ENCODE measurements at regions of chr19 and their contacts with region 1.

Region 1: GRCh38 chr19:53431399-53432087 is at the start of gene ZNF761:
- DNase-seq: peak; percentile 95 to 99 (median 97)
- H3K4me3 ChIP-seq: peak within 1 kb of the TSS; percentile 77 to 80
- H3K4me3 Mint-ChIP-seq: peak within 1 kb of the TSS; percentile 97 to 100 (median 98)
- H3K27ac ChIP-seq: peak within 1 kb of the TSS; percentile 68
- H3K27ac Mint-ChIP-seq: peak within 1 kb of the TSS; percentile 92 to 99 (median 97)
- H3K4me1 ChIP-seq: peaks cover 15% of the 10 kb centered on the region
- H3K4me1 Mint-ChIP-seq: peaks cover 17 to 45% (median 30%) of the 10 kb centered on the region in 4 donors
- H3K27me3 ChIP-seq: no peaks in the 10 kb centered on the region
- H3K27me3 Mint-ChIP-seq: no peaks in the 10 kb centered on the region
- total RNA-seq, gene ZNF761: 18.3 to 20.2 TPM

Region 2: GRCh38 chr19:53365134-53365898 is 66.2 kb before region 1 on chr19 and contains the start of gene ZNF525:
- CTCF ChIA-PET with region 1: no interaction called
- POLR2A ChIA-PET with region 1: no interaction called
- intact Hi-C with region 1: loop called (anchors 2 kb)
- DNase-seq: peak; percentile 93 to 97 (median 96)
- H3K4me3 ChIP-seq: peak within 1 kb of the TSS; percentile 57 to 87
- H3K4me3 Mint-ChIP-seq: peak within 1 kb of the TSS; percentile 95 to 99 (median 96)
- H3K27ac ChIP-seq: peak within 1 kb of the TSS; percentile 70
- H3K27ac Mint-ChIP-seq: peak within 1 kb of the TSS; percentile 90 to 98 (median 97)
- H3K4me1 ChIP-seq: peaks cover 6% of the 10 kb centered on the region
- H3K4me1 Mint-ChIP-seq: peaks cover 15 to 38% (median 21%) of the 10 kb centered on the region in 4 donors
- H3K27me3 ChIP-seq: no peaks in the 10 kb centered on the region
- H3K27me3 Mint-ChIP-seq: no peaks in the 10 kb centered on the region
- total RNA-seq, gene ZNF525: 36.5 to 36.6 TPM

Region 3: DNA sequence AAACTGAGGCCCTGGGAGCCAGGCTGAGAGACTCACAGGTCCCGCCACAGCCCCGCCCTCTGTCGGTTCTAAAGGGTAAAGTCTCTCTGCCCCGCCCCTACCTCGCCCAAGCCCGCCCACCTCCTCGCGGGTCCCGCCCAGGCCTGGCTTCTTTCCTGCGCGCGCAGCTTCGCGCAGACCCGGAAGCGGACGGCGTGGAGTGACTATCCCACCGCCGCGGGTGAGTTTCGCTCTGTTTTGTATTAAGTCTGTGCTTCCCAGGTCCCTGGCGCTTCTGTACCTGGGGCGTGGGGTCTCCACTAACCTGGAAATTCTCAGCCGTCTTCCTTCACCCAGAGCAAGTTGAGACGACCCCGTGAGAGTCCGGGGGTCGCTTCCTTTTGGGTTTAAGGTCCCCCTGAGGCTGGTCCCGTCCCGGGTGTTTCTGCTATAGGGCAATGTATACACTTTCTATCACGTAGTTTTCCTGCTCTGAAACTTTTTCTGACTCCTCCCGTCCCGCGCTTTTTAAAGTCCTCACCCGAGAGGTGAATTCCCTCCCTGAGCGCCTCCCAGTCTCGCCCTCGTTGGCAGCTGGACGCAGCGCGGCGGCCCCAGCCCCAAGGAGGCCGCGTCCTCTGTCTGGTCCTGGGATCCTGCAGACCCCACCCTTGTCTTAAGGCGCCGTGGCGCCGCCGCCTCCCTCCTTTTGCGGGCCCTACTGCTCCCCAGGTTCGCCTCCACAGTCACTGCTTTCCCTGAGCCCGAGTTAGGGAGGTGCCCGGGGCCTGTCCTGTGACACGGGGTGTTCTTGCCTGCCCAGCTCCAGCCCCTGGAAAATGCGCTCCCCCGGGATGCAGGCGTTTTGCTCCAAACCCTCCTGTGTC is 36.3 kb before region 1 on chr19 and contains the start of gene ZNF765:
- CTCF ChIA-PET with region 1: no interaction called
- POLR2A ChIA-PET with region 1: no interaction called
- intact Hi-C with region 1: loop called (anchors 1 kb)
- DNase-seq: peak; percentile 93 to 98 (median 95)
- H3K4me3 ChIP-seq: peak within 1 kb of the TSS; percentile 69 to 70
- H3K4me3 Mint-ChIP-seq: peak within 1 kb of the TSS; percentile 92 to 99 (median 98)
- H3K27ac ChIP-seq: peak within 1 kb of the TSS; percentile 75
- H3K27ac Mint-ChIP-seq: peak within 1 kb of the TSS; percentile 91 to 98 (median 96)
- H3K4me1 ChIP-seq: peaks cover 20% of the 10 kb centered on the region
- H3K4me1 Mint-ChIP-seq: peaks cover 18 to 41% (median 29%) of the 10 kb centered on the region in 4 donors
- H3K27me3 ChIP-seq: no peaks in the 10 kb centered on the region
- H3K27me3 Mint-ChIP-seq: no peaks in the 10 kb centered on the region
- total RNA-seq, gene ZNF765: 20.9 to 21.6 TPM

Region 4: GRCh38 chr19:53467485-53468262 is 36.1 kb after region 1 on chr19 and contains the start of gene ZNF813:
- CTCF ChIA-PET with region 1: no interaction called
- POLR2A ChIA-PET with region 1: no interaction called
- intact Hi-C with region 1: loop called (anchors 1 kb)
- DNase-seq: peak; percentile 88 to 96 (median 91)
- H3K4me3 ChIP-seq: peak within 1 kb of the TSS; percentile 57 to 62
- H3K4me3 Mint-ChIP-seq: peak within 1 kb of the TSS; percentile 89 to 96 (median 93)
- H3K27ac ChIP-seq: peak within 1 kb of the TSS; percentile 51
- H3K27ac Mint-ChIP-seq: peak within 1 kb of the TSS; percentile 83 to 94 (median 91)
- H3K4me1 ChIP-seq: peaks cover 13% of the 10 kb centered on the region
- H3K4me1 Mint-ChIP-seq: peaks cover 14 to 45% (median 25%) of the 10 kb centered on the region in 4 donors
- H3K27me3 ChIP-seq: no peaks in the 10 kb centered on the region
- H3K27me3 Mint-ChIP-seq: peaks cover 8 to 9% of the 10 kb centered on the region in 2 donors
- total RNA-seq, gene ZNF813: 9.4 to 10.1 TPM

Region 5: DNA sequence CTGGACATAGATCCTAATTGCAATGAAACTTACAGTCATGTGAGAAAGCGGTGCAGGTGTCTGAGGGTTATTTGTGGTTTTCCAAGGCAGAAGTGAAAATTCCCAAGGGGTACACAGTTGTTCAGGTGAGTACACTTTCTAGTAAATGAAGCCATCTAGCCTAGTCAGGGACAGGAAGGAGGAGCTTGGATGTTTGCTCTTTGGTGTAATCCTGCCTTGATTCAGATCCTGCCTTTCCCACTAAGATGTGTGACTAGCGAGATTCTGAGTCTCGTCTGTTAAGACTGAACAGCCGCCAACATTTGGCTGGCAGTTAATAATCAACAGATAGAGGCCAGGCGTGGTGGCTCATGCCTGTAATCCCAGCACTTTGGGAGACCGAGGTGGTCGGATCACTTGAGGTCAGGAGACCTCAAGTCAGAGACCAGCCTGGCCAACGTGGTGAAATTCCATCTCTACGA is 771.6 kb after region 1 on chr19:
- CTCF ChIA-PET with region 1: no interaction called
- POLR2A ChIA-PET with region 1: no interaction called
- intact Hi-C with region 1: loop called (anchors 5 kb)
- DNase-seq: no peak
- H3K4me3 ChIP-seq: no peak overlapping the region
- H3K4me3 Mint-ChIP-seq: peak overlapping the region; percentile 10 to 100 (median 64)
- H3K27ac ChIP-seq: peak overlapping the region; percentile 89
- H3K27ac Mint-ChIP-seq: peak overlapping the region in 6 of 7 donors; percentile 66 to 99 (median 85)
- H3K4me1 ChIP-seq: peaks cover 74% of the 10 kb centered on the region
- H3K4me1 Mint-ChIP-seq: peaks cover 44 to 86% (median 62%) of the 10 kb centered on the region in 4 donors
- H3K27me3 ChIP-seq: no peaks in the 10 kb centered on the region
- H3K27me3 Mint-ChIP-seq: no peaks in the 10 kb centered on the region

Measured in CD4-positive, alpha-beta memory T cell (primary cell).